CD8-positive, alpha-beta T cell (primary cell): ENCODE measurements at regions of chr11 and their contacts with region 1.

Region 1: GRCh38 chr11:66958232-66958955 is at the start of gene PC:
- DNase-seq: peak; percentile 91 to 99 (median 97)
- ATAC-seq: peak; percentile 96
- H3K4me3 ChIP-seq: peak within 1 kb of the TSS; percentile 51 to 71
- H3K4me3 Mint-ChIP-seq: peak within 1 kb of the TSS; percentile 90
- H3K27ac ChIP-seq: peak within 1 kb of the TSS; percentile 47 to 49
- H3K27ac Mint-ChIP-seq: peak within 1 kb of the TSS; percentile 68
- H3K4me1 ChIP-seq: peaks cover 6% of the 10 kb centered on the region
- H3K4me1 Mint-ChIP-seq: peaks cover 18% of the 10 kb centered on the region
- H3K27me3 ChIP-seq: no peaks in the 10 kb centered on the region
- H3K27me3 Mint-ChIP-seq: peaks cover 2% of the 10 kb centered on the region
- CTCF ChIP-seq: no peak
- total RNA-seq, gene PC: 4.4 to 4.5 TPM

Region 2: DNA sequence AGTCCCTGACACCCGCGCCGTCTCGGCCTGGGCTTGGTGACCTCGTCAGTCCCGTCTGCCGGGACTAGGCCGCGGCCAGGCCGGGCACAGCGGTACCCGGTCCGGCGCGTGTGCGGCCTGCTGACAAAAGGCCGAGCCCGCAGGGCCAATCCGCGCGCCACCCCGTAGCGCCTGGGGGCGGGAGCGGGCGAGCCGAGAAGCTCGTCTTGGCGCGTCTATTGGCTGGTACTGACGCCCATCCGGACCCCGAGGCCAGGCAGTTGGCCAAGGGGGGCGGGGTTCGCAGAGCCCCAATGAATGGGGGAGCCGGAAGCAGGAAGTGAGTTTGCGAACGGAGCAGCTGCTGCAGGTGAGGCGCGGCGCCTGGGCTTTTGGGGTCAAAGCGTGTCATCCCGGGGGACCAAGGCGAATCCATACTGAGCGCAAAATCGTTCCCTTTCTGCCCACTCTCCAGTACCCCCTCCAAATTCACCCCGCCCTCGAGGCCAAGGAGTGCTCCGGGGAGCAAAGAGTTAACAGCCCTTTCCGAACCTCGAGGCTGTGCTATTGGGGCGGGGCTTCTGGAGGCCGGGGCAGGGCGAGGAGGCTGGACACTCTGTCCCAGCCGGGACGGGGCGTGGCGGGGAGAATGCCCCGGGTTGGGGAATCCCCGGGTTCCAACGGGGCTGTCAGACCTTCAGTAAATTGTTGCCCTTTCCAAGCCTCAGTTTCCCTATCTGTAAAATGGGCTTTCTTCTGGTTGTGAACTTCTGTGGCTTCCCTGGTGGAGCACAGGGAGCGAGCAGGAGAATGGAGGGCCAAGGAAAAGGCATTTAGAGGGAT is 478.1 kb before region 1 on chr11 and contains the start of gene DPP3:
- CTCF ChIA-PET with region 1: no interaction called
- POLR2A ChIA-PET with region 1: no interaction called
- intact Hi-C with region 1: loop called in 1 of 2 experiments (anchors 5 kb)
- DNase-seq: peak; percentile 91 to 97 (median 95)
- ATAC-seq: peak; percentile 98
- H3K4me3 ChIP-seq: peak within 1 kb of the TSS; percentile 90 to 93
- H3K4me3 Mint-ChIP-seq: peak within 1 kb of the TSS; percentile 89
- H3K27ac ChIP-seq: peak within 1 kb of the TSS; percentile 70 to 90
- H3K27ac Mint-ChIP-seq: peak within 1 kb of the TSS; percentile 89
- H3K4me1 ChIP-seq: peaks cover 17% of the 10 kb centered on the region
- H3K4me1 Mint-ChIP-seq: peaks cover 31% of the 10 kb centered on the region
- H3K27me3 ChIP-seq: no peaks in the 10 kb centered on the region
- H3K27me3 Mint-ChIP-seq: no peaks in the 10 kb centered on the region
- CTCF ChIP-seq: no peak
- total RNA-seq, gene DPP3: 13.7 to 15.6 TPM

Region 3: GRCh38 chr11:66592457-66593302 is 365.7 kb before region 1 on chr11 and contains the starts of genes CCDC87 and CCS:
- CTCF ChIA-PET with region 1: no interaction called
- POLR2A ChIA-PET with region 1: no interaction called
- intact Hi-C with region 1: loop called in 1 of 2 experiments (anchors 10 kb)
- DNase-seq: peak; percentile 98 to 100 (median 99)
- ATAC-seq: peak; percentile 97
- H3K4me3 ChIP-seq: peak within 1 kb of the TSS; percentile 68 to 97
- H3K4me3 Mint-ChIP-seq: peak within 1 kb of the TSS; percentile 100
- H3K27ac ChIP-seq: peak within 1 kb of the TSS; percentile 84 to 86
- H3K27ac Mint-ChIP-seq: peak within 1 kb of the TSS; percentile 99
- H3K4me1 ChIP-seq: peaks cover 33% of the 10 kb centered on the region
- H3K4me1 Mint-ChIP-seq: peaks cover 39% of the 10 kb centered on the region
- H3K27me3 ChIP-seq: no peaks in the 10 kb centered on the region
- H3K27me3 Mint-ChIP-seq: no peaks in the 10 kb centered on the region
- CTCF ChIP-seq: peak; percentile 55
- total RNA-seq, gene CCDC87: 0.53 to 0.65 TPM
- total RNA-seq, gene CCS: 30.0 to 32.3 TPM

Region 4: GRCh38 chr11:66744485-66745340 is 213.7 kb before region 1 on chr11:
- CTCF ChIA-PET with region 1: no interaction called
- POLR2A ChIA-PET with region 1: no interaction called
- intact Hi-C with region 1: loop called in 1 of 2 experiments (anchors 2 kb)
- DNase-seq: peak; percentile 76 to 93 (median 87)
- ATAC-seq: peak; percentile 87
- H3K4me3 ChIP-seq: peak overlapping the region; percentile 81 to 92
- H3K4me3 Mint-ChIP-seq: peak overlapping the region; percentile 90
- H3K27ac ChIP-seq: peak overlapping the region; percentile 49 to 71
- H3K27ac Mint-ChIP-seq: peak overlapping the region; percentile 75
- H3K4me1 ChIP-seq: peaks cover 5% of the 10 kb centered on the region
- H3K4me1 Mint-ChIP-seq: peaks cover 3% of the 10 kb centered on the region
- H3K27me3 ChIP-seq: no peaks in the 10 kb centered on the region
- H3K27me3 Mint-ChIP-seq: no peaks in the 10 kb centered on the region
- CTCF ChIP-seq: no peak

Region 5: GRCh38 chr11:66842896-66843775 is 115.3 kb before region 1 on chr11 and contains the start of gene RCE1:
- CTCF ChIA-PET with region 1: no interaction called
- POLR2A ChIA-PET with region 1: interaction called, 8 read pairs
- intact Hi-C with region 1: loop called (anchors 1 to 5 kb)
- DNase-seq: peak; percentile 85 to 96 (median 89)
- ATAC-seq: peak; percentile 88
- H3K4me3 ChIP-seq: peak within 1 kb of the TSS; percentile 68 to 91
- H3K4me3 Mint-ChIP-seq: peak within 1 kb of the TSS; percentile 86
- H3K27ac ChIP-seq: peak within 1 kb of the TSS; percentile 99 to 100
- H3K27ac Mint-ChIP-seq: peak within 1 kb of the TSS; percentile 93
- H3K4me1 ChIP-seq: peaks cover 47% of the 10 kb centered on the region
- H3K4me1 Mint-ChIP-seq: peaks cover 51% of the 10 kb centered on the region
- H3K27me3 ChIP-seq: no peaks in the 10 kb centered on the region
- H3K27me3 Mint-ChIP-seq: no peaks in the 10 kb centered on the region
- CTCF ChIP-seq: no peak
- total RNA-seq, gene RCE1: 68.9 to 72.2 TPM

Region 6: GRCh38 chr11:67053896-67054842 is 95.8 kb after region 1 on chr11:
- CTCF ChIA-PET with region 1: no interaction called
- POLR2A ChIA-PET with region 1: no interaction called
- intact Hi-C with region 1: loop called in 1 of 2 experiments (anchors 10 kb)
- DNase-seq: peak in 5 of 9 experiments; percentile 28 to 57 (median 38)
- ATAC-seq: peak; percentile 74
- H3K4me3 ChIP-seq: no peak overlapping the region
- H3K4me3 Mint-ChIP-seq: no peak overlapping the region
- H3K27ac ChIP-seq: no peak overlapping the region
- H3K27ac Mint-ChIP-seq: no peak overlapping the region
- H3K4me1 ChIP-seq: peaks cover 10% of the 10 kb centered on the region
- H3K4me1 Mint-ChIP-seq: peaks cover 13% of the 10 kb centered on the region
- H3K27me3 ChIP-seq: peaks cover 0 to 4% of the 10 kb centered on the region in 2 experiments
- H3K27me3 Mint-ChIP-seq: peaks cover 15% of the 10 kb centered on the region
- CTCF ChIP-seq: peak; percentile 27

Region 7: GRCh38 chr11:67118801-67119584 is 160.6 kb after region 1 on chr11 and contains the start of gene KDM2A:
- CTCF ChIA-PET with region 1: no interaction called
- POLR2A ChIA-PET with region 1: interaction called, 3 read pairs
- intact Hi-C with region 1: loop called in 1 of 2 experiments (anchors 5 kb)
- DNase-seq: peak; percentile 98 to 100 (median 99)
- ATAC-seq: peak; percentile 81
- H3K4me3 ChIP-seq: peak within 1 kb of the TSS; percentile 62 to 80
- H3K4me3 Mint-ChIP-seq: peak within 1 kb of the TSS; percentile 97
- H3K27ac ChIP-seq: peak within 1 kb of the TSS; percentile 78 to 92
- H3K27ac Mint-ChIP-seq: peak within 1 kb of the TSS; percentile 96
- H3K4me1 ChIP-seq: peaks cover 34% of the 10 kb centered on the region
- H3K4me1 Mint-ChIP-seq: peaks cover 40% of the 10 kb centered on the region
- H3K27me3 ChIP-seq: no peaks in the 10 kb centered on the region
- H3K27me3 Mint-ChIP-seq: no peaks in the 10 kb centered on the region
- CTCF ChIP-seq: no peak
- total RNA-seq, gene KDM2A: 412 to 431 TPM